Naive thymus-derived CD4-positive, alpha-beta T cell (primary cell): ENCODE measurements at regions of chr1 and their contacts with region 1.

Region 1: GRCh38 chr1:23867953-23868556 is at the start of gene FUCA1:
- DNase-seq: peak; percentile 86 to 96 (median 95)
- ATAC-seq: peak; percentile 99
- H3K4me3 ChIP-seq: peak within 1 kb of the TSS; percentile 81
- H3K4me3 Mint-ChIP-seq: peak within 1 kb of the TSS; percentile 79 to 94 (median 89)
- H3K27ac ChIP-seq: peak within 1 kb of the TSS; percentile 77
- H3K27ac Mint-ChIP-seq: peak within 1 kb of the TSS; percentile 76 to 95 (median 90)
- H3K4me1 ChIP-seq: peaks cover 5 to 15% of the 10 kb centered on the region in 2 donors
- H3K4me1 Mint-ChIP-seq: peaks cover 18 to 38% (median 24%) of the 10 kb centered on the region in 7 donors
- H3K27me3 ChIP-seq: no peaks in the 10 kb centered on the region
- H3K27me3 Mint-ChIP-seq: peaks cover 0 to 15% (median 0%) of the 10 kb centered on the region in 5 donors
- total RNA-seq, gene FUCA1: 4.9 to 62.7 (median 16.3) TPM

Region 2: DNA sequence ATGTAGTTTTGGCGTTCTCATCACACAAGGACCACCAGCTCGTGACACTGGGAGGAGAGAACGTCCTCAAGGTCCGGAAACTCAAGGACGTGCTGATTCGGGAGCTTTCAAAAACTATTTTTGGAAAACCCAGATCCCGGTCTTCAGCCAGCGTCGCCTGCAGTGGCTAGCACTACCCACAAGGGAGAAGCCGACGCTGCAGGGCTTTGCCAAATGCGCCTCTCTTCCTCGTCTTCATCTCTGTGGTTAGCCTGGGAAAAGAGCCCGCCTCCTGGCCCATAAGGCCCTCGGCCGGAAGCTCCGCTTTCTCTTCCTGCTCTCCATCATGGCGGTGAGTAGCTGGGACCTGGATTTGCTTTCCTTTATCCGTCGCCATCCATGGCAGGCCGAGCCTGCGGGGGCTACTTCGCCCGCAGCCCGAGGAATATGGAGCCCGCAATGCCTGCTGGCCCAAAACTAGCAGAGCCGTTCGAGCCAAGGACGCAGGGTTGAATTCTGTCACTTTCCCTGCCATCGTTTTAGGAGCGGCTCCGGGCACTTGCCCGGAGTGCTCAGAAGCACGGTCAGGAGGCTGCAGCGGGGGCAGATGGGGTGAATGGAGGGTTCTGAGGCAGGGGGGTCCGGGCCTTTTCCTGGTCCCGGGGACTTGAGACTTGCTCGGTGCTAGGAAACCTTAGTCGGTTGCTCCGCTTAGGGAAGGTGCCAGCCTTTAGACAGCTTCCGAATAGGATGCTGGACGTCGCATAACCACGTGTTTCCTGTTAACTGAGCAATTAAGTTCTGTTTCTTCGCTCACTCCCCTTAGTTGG is 176.4 kb before region 1 on chr1 and contains the start of gene RPL11:
- CTCF ChIA-PET with region 1: no interaction called
- POLR2A ChIA-PET with region 1: no interaction called
- intact Hi-C with region 1: loop called in 1 of 2 experiments (anchors 1 kb)
- DNase-seq: peak; percentile 60 to 92 (median 88)
- ATAC-seq: peak; percentile 100
- H3K4me3 ChIP-seq: peak within 1 kb of the TSS; percentile 82
- H3K4me3 Mint-ChIP-seq: peak within 1 kb of the TSS; percentile 87 to 96 (median 94)
- H3K27ac ChIP-seq: peak within 1 kb of the TSS; percentile 88
- H3K27ac Mint-ChIP-seq: peak within 1 kb of the TSS; percentile 87 to 97 (median 93)
- H3K4me1 ChIP-seq: peaks cover 19 to 20% of the 10 kb centered on the region in 2 donors
- H3K4me1 Mint-ChIP-seq: peaks cover 33 to 50% (median 45%) of the 10 kb centered on the region in 7 donors
- H3K27me3 ChIP-seq: no peaks in the 10 kb centered on the region
- H3K27me3 Mint-ChIP-seq: no peaks in the 10 kb centered on the region
- total RNA-seq, gene RPL11: 1,206 to 2,420 (median 2,172) TPM

Region 3: GRCh38 chr1:23790696-23791515 is 77.1 kb before region 1 on chr1 and contains the start of gene LYPLA2:
- CTCF ChIA-PET with region 1: no interaction called
- POLR2A ChIA-PET with region 1: no interaction called
- intact Hi-C with region 1: loop called in 1 of 2 experiments (anchors 5 kb)
- DNase-seq: peak; percentile 65 to 90 (median 79)
- ATAC-seq: peak; percentile 91
- H3K4me3 ChIP-seq: peak within 1 kb of the TSS; percentile 96
- H3K4me3 Mint-ChIP-seq: peak within 1 kb of the TSS; percentile 91 to 98 (median 97)
- H3K27ac ChIP-seq: peak within 1 kb of the TSS; percentile 88
- H3K27ac Mint-ChIP-seq: peak within 1 kb of the TSS; percentile 88 to 99 (median 97)
- H3K4me1 ChIP-seq: peaks cover 6 to 18% of the 10 kb centered on the region in 2 donors
- H3K4me1 Mint-ChIP-seq: peaks cover 9 to 28% (median 23%) of the 10 kb centered on the region in 7 donors
- H3K27me3 ChIP-seq: no peaks in the 10 kb centered on the region
- H3K27me3 Mint-ChIP-seq: no peaks in the 10 kb centered on the region
- total RNA-seq, gene LYPLA2: 40.7 to 83.8 (median 48.2) TPM

Region 4: GRCh38 chr1:23825076-23825761 is 42.8 kb before region 1 on chr1 and contains the start of gene HMGCL:
- CTCF ChIA-PET with region 1: interaction called, 3 read pairs
- POLR2A ChIA-PET with region 1: interaction called, 5 read pairs
- intact Hi-C with region 1: loop called (anchors 1 kb)
- DNase-seq: peak; percentile 64 to 89 (median 81)
- ATAC-seq: peak; percentile 99
- H3K4me3 ChIP-seq: peak within 1 kb of the TSS; percentile 95
- H3K4me3 Mint-ChIP-seq: peak within 1 kb of the TSS; percentile 86 to 96 (median 94)
- H3K27ac ChIP-seq: peak within 1 kb of the TSS; percentile 95
- H3K27ac Mint-ChIP-seq: peak within 1 kb of the TSS; percentile 76 to 98 (median 96)
- H3K4me1 ChIP-seq: peaks cover 6% of the 10 kb centered on the region in 2 donors
- H3K4me1 Mint-ChIP-seq: peaks cover 11 to 33% (median 20%) of the 10 kb centered on the region in 7 donors
- H3K27me3 ChIP-seq: no peaks in the 10 kb centered on the region
- H3K27me3 Mint-ChIP-seq: peaks cover 0 to 5% (median 0%) of the 10 kb centered on the region in 5 donors
- total RNA-seq, gene HMGCL: 16.2 to 38.9 (median 27.3) TPM

Region 5: DNA sequence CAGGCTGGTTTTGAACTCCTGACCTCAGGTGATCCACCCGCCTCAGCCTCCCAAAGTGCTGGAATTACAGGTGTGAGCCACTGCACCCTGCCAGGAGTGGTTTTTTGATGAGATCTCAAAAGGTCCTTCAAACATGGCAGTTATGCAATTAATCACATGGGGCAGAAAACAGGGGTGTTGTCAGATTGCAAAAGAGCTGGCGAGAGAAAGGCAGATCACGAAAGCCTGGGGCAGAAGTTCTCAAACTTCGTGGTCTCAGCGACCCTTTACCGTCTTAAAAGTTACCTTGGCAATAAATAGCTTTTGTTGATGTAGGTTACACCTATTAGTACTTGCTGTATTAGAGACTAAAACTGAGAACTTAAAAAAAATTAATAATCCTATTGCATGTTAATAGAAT is 29.0 kb after region 1 on chr1:
- CTCF ChIA-PET with region 1: no interaction called
- POLR2A ChIA-PET with region 1: no interaction called
- intact Hi-C with region 1: loop called in 1 of 2 experiments (anchors 2 kb)
- DNase-seq: no peak
- ATAC-seq: no peak
- H3K4me3 ChIP-seq: no peak overlapping the region
- H3K4me3 Mint-ChIP-seq: peak overlapping the region in 1 of 10 donors; percentile 54
- H3K27ac ChIP-seq: no peak overlapping the region
- H3K27ac Mint-ChIP-seq: peak overlapping the region in 2 of 9 donors; percentile 12 to 15
- H3K4me1 ChIP-seq: peaks cover 3 to 13% of the 10 kb centered on the region in 2 donors
- H3K4me1 Mint-ChIP-seq: peaks cover 5 to 28% (median 22%) of the 10 kb centered on the region in 7 donors
- H3K27me3 ChIP-seq: no peaks in the 10 kb centered on the region
- H3K27me3 Mint-ChIP-seq: peaks cover 0 to 37% (median 4%) of the 10 kb centered on the region in 5 donors

Region 6: DNA sequence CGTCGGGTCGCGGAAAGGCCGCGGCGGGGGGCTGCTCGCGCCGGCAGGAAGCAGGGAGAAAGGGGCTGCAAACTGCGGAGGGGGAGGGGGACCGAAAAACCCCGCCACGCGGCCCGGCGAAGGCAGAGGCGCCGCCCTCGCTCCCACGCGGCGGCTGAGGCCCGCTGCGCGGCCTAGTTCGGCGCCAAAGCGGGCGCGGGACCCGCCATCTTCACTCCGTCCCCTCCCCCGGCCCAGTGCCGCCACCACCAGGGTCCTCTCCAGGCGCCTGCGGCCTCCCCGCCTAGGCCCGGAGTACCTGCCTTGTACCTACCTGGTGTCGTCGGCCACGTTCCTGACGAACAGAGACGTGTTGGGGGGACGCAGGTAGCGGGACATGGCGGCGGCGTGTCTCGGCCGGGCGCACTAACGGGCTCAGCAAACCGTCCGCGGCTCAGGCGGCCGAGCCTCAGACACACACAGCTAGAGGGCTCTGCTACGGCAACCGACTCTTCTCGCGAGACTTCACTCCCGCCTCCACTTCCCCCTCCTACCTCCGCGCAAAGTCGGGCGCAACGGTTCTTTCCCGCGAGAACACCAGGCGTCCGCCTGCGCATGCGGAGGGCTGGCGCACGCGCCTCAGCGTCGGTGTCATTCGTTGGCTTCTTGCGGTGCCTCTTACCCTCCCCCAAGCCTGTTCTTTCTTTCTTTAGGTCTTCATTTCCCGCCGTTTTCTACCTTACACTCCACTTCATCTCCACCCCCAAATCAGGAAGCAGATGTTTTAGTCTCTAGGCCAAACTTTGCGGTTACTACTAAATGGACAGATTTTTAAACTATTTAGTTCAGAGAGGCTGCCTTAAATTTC is 112.0 kb after region 1 on chr1 and contains the start of gene SRSF10:
- CTCF ChIA-PET with region 1: no interaction called
- POLR2A ChIA-PET with region 1: no interaction called
- intact Hi-C with region 1: loop called in 1 of 2 experiments (anchors 2 kb)
- DNase-seq: peak; percentile 91 to 99 (median 98)
- ATAC-seq: peak; percentile 97
- H3K4me3 ChIP-seq: peak within 1 kb of the TSS; percentile 75
- H3K4me3 Mint-ChIP-seq: peak within 1 kb of the TSS; percentile 87 to 98 (median 94)
- H3K27ac ChIP-seq: peak within 1 kb of the TSS; percentile 98
- H3K27ac Mint-ChIP-seq: peak within 1 kb of the TSS; percentile 94 to 99 (median 96)
- H3K4me1 ChIP-seq: peaks cover 31 to 43% of the 10 kb centered on the region in 2 donors
- H3K4me1 Mint-ChIP-seq: peaks cover 39 to 57% (median 53%) of the 10 kb centered on the region in 7 donors
- H3K27me3 ChIP-seq: no peaks in the 10 kb centered on the region
- H3K27me3 Mint-ChIP-seq: peaks cover 0 to 4% (median 0%) of the 10 kb centered on the region in 5 donors
- total RNA-seq, gene SRSF10: 170 to 252 (median 193) TPM